ENCODE measurements at regions of chr6 and their contacts with region 1.

Region 1: DNA sequence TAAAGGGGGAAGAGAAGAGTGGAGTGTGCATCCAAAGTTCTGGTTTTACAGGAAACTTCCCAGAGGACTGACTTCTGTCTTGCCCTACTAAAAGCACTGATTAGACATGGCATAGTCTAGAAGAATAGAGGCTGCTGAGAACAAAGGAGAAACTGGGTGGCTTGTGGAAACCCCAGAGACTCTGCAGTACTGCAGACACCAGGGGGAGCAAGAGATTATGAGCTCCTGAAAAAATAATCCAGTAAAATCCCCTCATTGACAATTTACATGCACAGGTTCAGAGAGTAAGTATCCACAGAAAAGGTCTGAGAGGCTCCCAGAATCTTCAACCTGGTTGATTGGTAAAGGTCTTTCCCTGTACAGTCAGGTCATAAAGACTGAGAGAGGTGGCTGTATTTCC is 48.7 kb upstream of the CLVS2 start:
- DNase-seq: peak in 1 of 2 experiments; percentile 47
- H3K4me3 ChIP-seq: no peak overlapping the region
- H3K27ac ChIP-seq: no peak overlapping the region
- H3K4me1 ChIP-seq: no peaks in the 10 kb centered on the region
- H3K27me3 ChIP-seq: no peaks in the 10 kb centered on the region
- CTCF ChIP-seq: peak; percentile 19 to 64 (median 63)
- EP300 ChIP-seq: no peak
- POLR2A ChIP-seq: no peak
- RAD21 ChIP-seq: peak; percentile 69 to 72

Region 2: DNA sequence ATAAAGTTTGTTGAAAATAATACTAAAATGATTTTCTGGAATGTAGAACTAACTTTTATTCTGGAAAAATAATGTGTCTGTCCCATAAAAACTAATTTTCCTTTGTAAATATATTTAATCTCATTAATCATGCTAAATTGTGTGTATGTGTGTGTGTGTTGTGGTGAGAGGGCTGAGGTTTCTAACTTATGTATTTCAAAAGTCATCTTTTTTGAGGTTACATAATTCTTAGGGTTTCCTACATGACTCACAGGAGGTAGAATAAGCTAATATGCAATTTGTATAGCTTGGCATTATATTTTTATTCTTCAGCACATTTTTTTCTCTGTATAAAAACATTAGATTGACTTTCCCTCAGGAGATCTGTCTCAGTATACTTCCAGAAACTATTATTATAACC is 15.4 kb before region 1 on chr6:
- CTCF ChIA-PET with region 1: interaction called, 15 read pairs
- POLR2A ChIA-PET with region 1: no interaction called
- DNase-seq: no peak
- H3K4me3 ChIP-seq: no peak overlapping the region
- H3K27ac ChIP-seq: no peak overlapping the region
- H3K4me1 ChIP-seq: no peaks in the 10 kb centered on the region
- H3K27me3 ChIP-seq: no peaks in the 10 kb centered on the region
- CTCF ChIP-seq: no peak
- EP300 ChIP-seq: no peak
- POLR2A ChIP-seq: no peak
- RAD21 ChIP-seq: no peak

Region 3: GRCh38 chr6:123091091-123091895 is 143.9 kb after region 1 on chr6:
- CTCF ChIA-PET with region 1: no interaction called
- POLR2A ChIA-PET with region 1: no interaction called
- DNase-seq: no peak
- H3K4me3 ChIP-seq: no peak overlapping the region
- H3K27ac ChIP-seq: no peak overlapping the region
- H3K4me1 ChIP-seq: no peaks in the 10 kb centered on the region
- H3K27me3 ChIP-seq: no peaks in the 10 kb centered on the region
- CTCF ChIP-seq: no peak
- EP300 ChIP-seq: no peak
- POLR2A ChIP-seq: no peak
- RAD21 ChIP-seq: no peak